ENCODE measurements at regions of chr6 and their contacts with region 1.

Region 1: DNA sequence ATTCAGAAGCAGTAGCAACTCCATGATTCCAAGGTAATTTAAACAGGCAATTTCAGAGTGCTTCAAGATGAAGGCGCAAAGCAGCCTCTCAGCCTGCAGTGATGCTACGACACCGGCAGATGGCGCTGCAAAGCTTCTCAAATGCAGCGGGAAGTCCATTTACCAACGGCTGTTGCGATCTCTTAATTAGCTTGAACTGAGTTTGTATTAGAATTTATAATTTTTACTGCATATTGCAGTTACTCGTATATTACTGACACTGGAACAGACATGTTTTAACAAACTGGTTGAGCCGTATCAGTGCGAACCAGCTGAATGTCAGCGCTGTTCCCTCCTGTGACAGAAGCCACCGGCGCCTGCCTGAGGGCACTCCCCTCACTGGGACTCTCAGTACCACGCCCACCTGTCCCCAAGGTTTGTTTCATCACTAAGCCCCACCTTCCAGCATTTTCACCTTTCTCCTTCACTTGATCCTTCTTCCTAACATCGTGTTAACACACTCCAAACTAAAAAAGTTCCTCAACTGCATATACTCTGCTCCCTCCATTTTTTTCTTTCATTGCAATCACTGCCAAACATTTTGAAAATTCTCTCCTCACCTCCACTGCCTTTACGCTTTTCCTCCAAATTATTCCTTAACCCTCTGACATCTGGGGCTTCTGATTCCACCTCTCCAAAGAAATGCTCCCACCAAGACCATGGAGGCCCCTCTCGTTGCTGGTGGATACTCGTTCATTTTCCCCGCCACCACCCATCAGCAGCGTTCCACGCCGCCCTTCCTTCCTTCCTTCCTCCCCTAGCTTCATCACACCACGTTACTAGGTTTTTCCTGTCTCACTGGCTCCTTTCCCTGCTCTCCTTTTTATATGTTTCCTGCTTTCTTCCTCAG is 14.5 kb downstream of the GNL1 start:
- DNase-seq: peak; percentile 59 to 92 (median 82)
- ATAC-seq: peak; percentile 69
- H3K4me3 ChIP-seq: peak overlapping the region; percentile 42 to 66
- H3K4me3 Mint-ChIP-seq: peak overlapping the region; percentile 88
- H3K27ac ChIP-seq: peak overlapping the region; percentile 50 to 72
- H3K27ac Mint-ChIP-seq: peak overlapping the region; percentile 97
- H3K4me1 ChIP-seq: peaks cover 34% of the 10 kb centered on the region
- H3K4me1 Mint-ChIP-seq: peaks cover 34% of the 10 kb centered on the region
- H3K27me3 ChIP-seq: no peaks in the 10 kb centered on the region
- H3K27me3 Mint-ChIP-seq: no peaks in the 10 kb centered on the region
- CTCF ChIP-seq: peak; percentile 99

Region 2: DNA sequence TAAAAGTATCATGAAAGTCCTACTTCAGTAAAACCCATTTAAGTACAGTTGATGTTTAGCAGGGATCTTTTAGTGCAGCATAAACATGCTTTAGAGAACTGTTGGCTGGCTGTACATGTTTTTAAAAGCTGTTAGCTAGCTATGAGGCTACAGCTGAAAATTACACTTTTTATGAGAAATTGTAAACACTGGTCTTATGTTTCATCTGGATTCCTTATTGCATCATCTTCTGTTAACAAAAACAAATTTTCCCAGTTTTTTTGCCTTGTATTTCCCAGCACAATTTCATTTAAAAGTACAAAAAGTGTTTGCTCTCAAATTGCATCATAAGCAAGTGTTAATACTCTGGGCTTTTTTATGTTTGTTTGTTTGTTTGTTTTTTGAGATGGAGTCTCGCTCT is 70.8 kb before region 1 on chr6:
- CTCF ChIA-PET with region 1: interaction called, 10 read pairs
- POLR2A ChIA-PET with region 1: interaction called, 3 read pairs
- intact Hi-C with region 1: no loop called
- DNase-seq: no peak
- ATAC-seq: no peak
- H3K4me3 ChIP-seq: no peak overlapping the region
- H3K4me3 Mint-ChIP-seq: no peak overlapping the region
- H3K27ac ChIP-seq: no peak overlapping the region
- H3K27ac Mint-ChIP-seq: no peak overlapping the region
- H3K4me1 ChIP-seq: peaks cover 12% of the 10 kb centered on the region
- H3K4me1 Mint-ChIP-seq: peaks cover 9% of the 10 kb centered on the region
- H3K27me3 ChIP-seq: peaks cover 32% of the 10 kb centered on the region in 2 experiments
- H3K27me3 Mint-ChIP-seq: peaks cover 65% of the 10 kb centered on the region
- CTCF ChIP-seq: no peak

Region 3: DNA sequence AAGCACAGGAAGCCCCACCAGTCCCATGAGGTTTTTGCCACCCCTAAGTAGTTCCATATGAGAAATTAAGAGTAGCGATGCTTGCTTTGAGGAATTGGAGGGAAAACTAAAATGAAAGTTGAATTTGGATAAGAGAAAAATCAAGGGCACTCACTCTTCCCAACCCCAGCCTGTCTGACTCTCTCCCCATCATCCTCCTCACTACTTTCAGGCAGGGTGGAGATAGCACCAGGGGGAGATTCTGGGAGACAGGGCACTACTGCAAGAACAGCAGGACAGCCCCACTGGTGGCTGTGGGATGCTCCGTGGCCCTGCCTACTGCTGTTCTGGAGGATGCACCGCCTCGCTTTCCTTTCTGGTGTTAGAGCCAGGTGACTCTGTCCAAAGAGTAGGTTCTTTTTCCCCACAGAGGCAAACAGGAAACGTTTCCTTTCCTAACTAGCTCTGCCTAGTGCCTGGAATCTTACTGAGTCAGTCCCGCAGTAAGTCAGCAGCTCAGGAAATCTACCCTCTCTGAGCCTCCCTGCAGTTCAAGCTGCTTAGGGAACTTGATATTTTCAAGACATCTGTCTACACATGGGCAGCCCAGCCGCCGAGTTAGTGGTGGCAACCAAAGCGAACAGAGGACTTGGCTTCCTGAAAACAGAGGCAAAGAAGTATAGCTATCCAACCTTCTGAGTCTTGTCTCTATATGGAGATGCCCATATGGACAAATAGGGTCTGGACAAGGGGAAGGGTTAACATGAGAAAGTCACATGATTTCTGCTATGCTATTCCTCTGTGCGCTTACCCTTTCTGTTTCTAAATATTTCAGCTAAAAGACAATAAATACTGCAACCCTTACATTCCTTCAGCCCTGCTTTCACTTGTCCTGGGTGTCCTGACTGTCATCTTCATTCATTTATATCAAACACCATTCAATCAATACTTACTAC is 41.1 kb before region 1 on chr6:
- CTCF ChIA-PET with region 1: interaction called, 73 read pairs
- POLR2A ChIA-PET with region 1: interaction called, 113 read pairs
- intact Hi-C with region 1: no loop called
- DNase-seq: peak in 1 of 9 experiments; percentile 30
- ATAC-seq: peak; percentile 55
- H3K4me3 ChIP-seq: peak overlapping the region; percentile 14 to 38
- H3K4me3 Mint-ChIP-seq: peak overlapping the region; percentile 80
- H3K27ac ChIP-seq: no peak overlapping the region
- H3K27ac Mint-ChIP-seq: peak overlapping the region; percentile 83
- H3K4me1 ChIP-seq: peaks cover 38% of the 10 kb centered on the region
- H3K4me1 Mint-ChIP-seq: peaks cover 42% of the 10 kb centered on the region
- H3K27me3 ChIP-seq: no peaks in the 10 kb centered on the region
- H3K27me3 Mint-ChIP-seq: no peaks in the 10 kb centered on the region
- CTCF ChIP-seq: no peak

Region 4: DNA sequence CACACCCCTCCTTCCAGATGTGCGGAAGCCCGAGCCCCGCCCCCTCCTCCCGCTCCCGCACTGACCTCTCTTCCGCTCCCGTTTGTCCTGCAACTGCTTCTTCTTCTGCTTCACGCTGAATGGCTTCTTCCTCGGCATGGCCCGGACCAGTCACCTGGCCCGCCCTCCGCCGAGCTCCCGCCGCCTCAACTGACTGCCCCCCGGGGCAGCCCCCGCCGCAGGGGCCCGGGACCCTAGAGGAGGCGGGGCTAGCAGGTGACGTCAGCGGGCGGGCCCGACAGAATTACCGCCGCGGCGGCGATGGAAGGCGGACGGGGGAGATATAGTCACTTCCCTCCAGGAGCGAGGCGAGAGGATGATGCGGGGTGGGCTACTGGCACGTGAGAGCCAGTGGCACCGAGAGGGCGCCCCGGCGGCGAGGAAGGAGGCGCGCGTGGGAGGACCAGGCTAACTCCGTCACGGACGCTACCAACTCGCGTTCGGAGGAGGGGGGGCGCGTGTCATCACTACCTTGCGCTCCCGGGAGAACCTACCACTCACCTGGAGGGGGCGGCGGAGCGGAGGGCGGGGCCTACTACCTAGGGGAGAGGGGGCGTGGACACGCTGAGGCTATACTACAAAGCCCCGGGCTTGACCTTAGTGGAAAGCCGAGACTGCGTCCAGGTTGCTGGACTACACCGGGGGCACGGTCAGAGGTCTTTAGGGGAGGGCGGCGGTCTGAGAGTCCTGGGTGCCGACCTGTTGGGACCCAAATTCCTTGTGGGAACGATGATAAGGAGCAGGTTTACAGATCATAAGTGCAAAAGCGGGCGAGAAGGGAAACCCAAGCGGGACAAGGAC is 14.5 kb after region 1 on chr6 and contains the start of gene GNL1:
- CTCF ChIA-PET with region 1: interaction called, 40 read pairs
- POLR2A ChIA-PET with region 1: interaction called, 26 read pairs
- intact Hi-C with region 1: loop called in 1 of 2 experiments (anchors 1 kb)
- DNase-seq: peak; percentile 97 to 100 (median 99)
- ATAC-seq: peak; percentile 90
- H3K4me3 ChIP-seq: peak within 1 kb of the TSS; percentile 75 to 92
- H3K4me3 Mint-ChIP-seq: peak within 1 kb of the TSS; percentile 95
- H3K27ac ChIP-seq: peak within 1 kb of the TSS; percentile 98 to 99
- H3K27ac Mint-ChIP-seq: peak within 1 kb of the TSS; percentile 99
- H3K4me1 ChIP-seq: peaks cover 25% of the 10 kb centered on the region
- H3K4me1 Mint-ChIP-seq: peaks cover 42% of the 10 kb centered on the region
- H3K27me3 ChIP-seq: no peaks in the 10 kb centered on the region
- H3K27me3 Mint-ChIP-seq: no peaks in the 10 kb centered on the region
- CTCF ChIP-seq: no peak
- total RNA-seq, gene GNL1: 148 to 159 TPM

Region 5: GRCh38 chr6:30578051-30578450 is 36.3 kb after region 1 on chr6:
- CTCF ChIA-PET with region 1: interaction called, 17 read pairs
- POLR2A ChIA-PET with region 1: no interaction called
- intact Hi-C with region 1: no loop called
- DNase-seq: no peak
- ATAC-seq: no peak
- H3K4me3 ChIP-seq: no peak overlapping the region
- H3K4me3 Mint-ChIP-seq: no peak overlapping the region
- H3K27ac ChIP-seq: no peak overlapping the region
- H3K27ac Mint-ChIP-seq: no peak overlapping the region
- H3K4me1 ChIP-seq: peaks cover 26% of the 10 kb centered on the region
- H3K4me1 Mint-ChIP-seq: peaks cover 30% of the 10 kb centered on the region
- H3K27me3 ChIP-seq: no peaks in the 10 kb centered on the region
- H3K27me3 Mint-ChIP-seq: no peaks in the 10 kb centered on the region
- CTCF ChIP-seq: no peak

Region 6: DNA sequence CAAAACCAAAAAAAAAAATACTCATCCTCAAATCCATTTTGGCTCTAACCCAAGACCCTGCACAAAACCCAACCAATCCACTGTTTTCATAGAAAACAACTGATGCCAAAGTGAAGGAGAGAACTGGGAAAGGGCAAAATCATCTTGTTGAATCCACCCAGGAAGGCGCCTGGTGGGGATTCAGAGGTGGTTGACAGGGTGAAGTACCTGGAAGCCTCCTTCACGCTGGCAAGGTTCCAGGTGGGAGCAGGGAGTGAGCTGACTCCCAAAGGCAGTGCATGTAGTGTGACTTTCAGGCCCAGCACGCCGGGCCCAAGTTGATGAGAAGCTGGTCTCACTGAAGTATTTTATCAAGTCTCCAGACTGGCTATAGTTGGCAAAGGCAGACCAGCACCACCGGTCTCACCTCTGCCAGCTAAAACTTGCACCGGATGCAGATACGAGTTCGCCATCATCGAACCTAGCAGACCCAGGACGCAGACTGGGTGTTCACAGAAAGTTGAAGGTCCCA is 58.7 kb after region 1 on chr6:
- CTCF ChIA-PET with region 1: interaction called, 237 read pairs
- POLR2A ChIA-PET with region 1: interaction called, 44 read pairs
- intact Hi-C with region 1: loop called (anchors 1 kb)
- DNase-seq: no peak
- ATAC-seq: no peak
- H3K4me3 ChIP-seq: no peak overlapping the region
- H3K4me3 Mint-ChIP-seq: no peak overlapping the region
- H3K27ac ChIP-seq: peak overlapping the region in 1 of 2 experiments; percentile 67
- H3K27ac Mint-ChIP-seq: no peak overlapping the region
- H3K4me1 ChIP-seq: peaks cover 15% of the 10 kb centered on the region
- H3K4me1 Mint-ChIP-seq: peaks cover 22% of the 10 kb centered on the region
- H3K27me3 ChIP-seq: no peaks in the 10 kb centered on the region
- H3K27me3 Mint-ChIP-seq: no peaks in the 10 kb centered on the region
- CTCF ChIP-seq: no peak

Region 7: DNA sequence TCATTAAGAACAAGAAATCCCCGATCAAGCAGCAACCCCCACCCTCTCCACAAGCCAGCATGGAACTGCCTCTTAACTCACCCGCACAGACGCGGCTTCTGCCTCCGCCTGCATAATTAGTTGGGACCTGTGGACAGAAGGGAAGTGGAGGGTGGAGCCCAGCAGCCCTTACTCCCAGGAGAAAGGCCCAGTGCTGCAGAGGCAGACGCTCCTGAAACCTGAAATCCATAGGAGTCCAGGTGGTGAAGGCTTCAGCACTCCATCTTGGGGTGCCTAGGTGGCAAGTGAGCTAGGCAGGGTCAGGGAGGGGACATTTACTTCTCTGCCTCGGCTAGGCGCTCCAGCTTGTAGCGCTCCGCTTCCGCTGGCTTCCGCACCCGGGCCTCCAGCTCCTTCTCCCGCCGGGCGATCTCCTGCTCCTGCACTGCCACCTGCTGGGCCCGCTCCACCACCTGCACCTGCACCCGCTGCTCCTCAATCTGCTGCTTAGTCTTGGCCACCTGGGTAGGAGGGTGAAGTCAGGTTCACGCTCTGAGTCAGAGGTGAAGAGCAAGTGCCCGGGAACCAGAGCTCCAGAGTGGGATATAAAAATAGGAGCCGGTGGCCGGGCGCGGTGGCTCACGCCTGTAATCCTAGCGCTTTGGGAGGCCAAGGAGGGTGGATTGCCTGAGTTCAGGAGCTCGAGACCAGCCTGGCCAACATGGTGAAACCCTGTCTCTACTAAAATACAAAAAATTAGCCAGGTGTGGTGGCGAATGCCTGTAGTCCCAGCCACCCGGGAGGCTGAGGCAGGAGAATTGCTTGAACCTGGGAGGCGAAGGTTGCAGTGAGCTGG is 189.1 kb after region 1 on chr6:
- CTCF ChIA-PET with region 1: interaction called, 109 read pairs
- POLR2A ChIA-PET with region 1: no interaction called
- intact Hi-C with region 1: loop called in 1 of 2 experiments (anchors 1 kb)
- DNase-seq: peak; percentile 67 to 91 (median 85)
- ATAC-seq: peak; percentile 98
- H3K4me3 ChIP-seq: peak overlapping the region in 1 of 2 experiments; percentile 21
- H3K4me3 Mint-ChIP-seq: peak overlapping the region; percentile 47
- H3K27ac ChIP-seq: no peak overlapping the region
- H3K27ac Mint-ChIP-seq: no peak overlapping the region
- H3K4me1 ChIP-seq: peaks cover 29% of the 10 kb centered on the region
- H3K4me1 Mint-ChIP-seq: peaks cover 37% of the 10 kb centered on the region
- H3K27me3 ChIP-seq: no peaks in the 10 kb centered on the region
- H3K27me3 Mint-ChIP-seq: no peaks in the 10 kb centered on the region
- CTCF ChIP-seq: peak; percentile 67

Region 8: GRCh38 chr6:31430449-31430848 is 888.7 kb after region 1 on chr6:
- CTCF ChIA-PET with region 1: no interaction called
- POLR2A ChIA-PET with region 1: no interaction called
- intact Hi-C with region 1: no loop called
- DNase-seq: peak in 2 of 9 experiments; percentile 20 to 36
- ATAC-seq: no peak
- H3K4me3 ChIP-seq: no peak overlapping the region
- H3K4me3 Mint-ChIP-seq: no peak overlapping the region
- H3K27ac ChIP-seq: no peak overlapping the region
- H3K27ac Mint-ChIP-seq: no peak overlapping the region
- H3K4me1 ChIP-seq: no peaks in the 10 kb centered on the region
- H3K4me1 Mint-ChIP-seq: no peaks in the 10 kb centered on the region
- H3K27me3 ChIP-seq: no peaks in the 10 kb centered on the region
- H3K27me3 Mint-ChIP-seq: no peaks in the 10 kb centered on the region
- CTCF ChIP-seq: no peak